ENCODE measurements at regions of chr10 and their contacts with region 1.

Region 1: DNA sequence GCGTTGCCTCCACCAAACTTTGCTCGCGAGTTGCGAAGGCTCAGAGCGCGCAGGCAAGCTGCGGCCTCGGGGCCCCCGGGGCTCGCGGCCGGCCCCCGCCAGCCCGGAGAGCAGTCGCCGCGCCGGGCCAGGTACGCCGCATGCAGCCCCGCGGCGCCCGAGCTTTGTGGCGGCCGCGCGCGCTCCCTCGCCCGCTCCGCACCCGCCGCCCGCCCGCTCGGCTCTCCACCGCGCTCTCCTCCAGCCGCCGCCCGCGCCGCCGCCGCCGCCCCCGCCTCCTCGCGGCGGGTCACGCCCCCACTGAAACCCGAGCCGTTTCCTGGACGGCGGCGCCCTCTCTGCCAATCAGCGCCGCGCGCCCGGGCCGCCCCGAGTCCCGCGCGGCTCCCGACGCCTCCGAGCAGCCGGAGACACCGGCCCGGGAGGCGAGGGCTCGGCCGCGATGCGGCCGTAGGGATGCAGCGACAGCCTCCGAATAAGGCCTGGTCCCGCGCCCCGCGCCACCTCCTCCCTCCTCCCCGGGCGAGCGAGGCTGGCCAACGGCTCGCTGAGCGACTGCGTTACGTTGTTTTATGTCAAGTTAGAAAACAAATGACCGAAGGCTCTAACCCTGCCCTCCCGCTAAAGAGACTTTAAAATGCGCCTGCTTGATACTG is at the start of gene FGFR2:
- DNase-seq: peak; percentile 85
- H3K4me3 ChIP-seq: peak within 1 kb of the TSS; percentile 79 to 93 (median 83)
- H3K27ac ChIP-seq: peak within 1 kb of the TSS; percentile 87
- H3K4me1 ChIP-seq: peaks cover 22% of the 10 kb centered on the region
- H3K27me3 ChIP-seq: no peaks in the 10 kb centered on the region
- CTCF ChIP-seq: no peak
- total RNA-seq, gene FGFR2: 22.0 to 86.9 TPM

Region 2: DNA sequence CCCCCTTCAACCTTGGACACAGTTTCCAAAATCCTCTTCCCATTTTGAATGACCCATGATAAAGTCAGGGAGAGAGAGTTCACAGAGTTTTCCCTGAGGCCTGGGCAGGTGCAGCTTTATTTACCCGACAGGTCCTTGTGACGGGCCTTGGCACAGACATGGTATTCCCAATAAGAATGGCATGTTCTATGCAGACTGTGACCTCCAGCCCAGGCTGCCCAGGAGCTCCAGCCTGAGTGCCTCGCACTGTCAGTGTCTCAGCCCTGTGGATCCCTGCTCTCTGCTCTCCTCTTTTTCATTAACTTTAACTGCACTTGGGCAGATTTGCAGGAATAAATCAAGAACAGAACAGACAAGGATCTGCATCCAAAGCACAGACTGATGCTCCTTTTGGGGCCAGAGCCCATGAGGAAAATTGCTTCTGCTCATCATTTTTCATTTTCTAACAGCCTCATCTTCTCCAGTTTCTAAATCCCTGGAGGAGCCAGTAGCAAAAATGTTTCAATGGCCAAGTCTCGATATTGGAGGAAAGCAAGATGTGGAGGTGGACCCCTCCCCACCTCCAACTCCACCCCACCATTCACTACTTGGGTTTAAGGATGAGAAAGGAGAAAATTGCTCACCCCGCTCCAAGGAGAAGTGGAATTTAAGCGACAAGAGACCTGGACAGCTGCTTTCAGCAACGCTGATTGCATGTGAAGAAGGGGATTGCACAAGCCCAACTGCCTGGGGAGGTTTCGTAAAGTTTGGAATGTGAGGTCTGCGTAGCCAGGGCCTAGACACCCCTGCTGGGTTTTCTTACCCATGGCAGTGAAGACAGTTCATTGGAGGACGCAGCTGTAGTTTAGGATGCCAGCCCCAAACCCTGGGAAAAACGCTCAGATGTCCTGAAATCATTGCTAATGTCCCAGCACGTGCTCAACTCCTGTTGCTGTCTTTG is 521.3 kb before region 1 on chr10:
- CTCF ChIA-PET with region 1: no interaction called
- dilution Hi-C with region 1: no loop called
- in situ Hi-C with region 1: loop called in 1 of 2 experiments (anchors 25 kb)
- intact Hi-C with region 1: loop called (anchors 5 kb)
- DNase-seq: peak; percentile 78
- H3K4me3 ChIP-seq: no peak overlapping the region
- H3K27ac ChIP-seq: peak overlapping the region; percentile 95
- H3K4me1 ChIP-seq: peaks cover 38% of the 10 kb centered on the region
- H3K27me3 ChIP-seq: no peaks in the 10 kb centered on the region
- CTCF ChIP-seq: peak in 1 of 2 donors; percentile 3

Region 3: GRCh38 chr10:121157998-121158397 is 440.3 kb before region 1 on chr10:
- CTCF ChIA-PET with region 1: no interaction called
- dilution Hi-C with region 1: no loop called
- in situ Hi-C with region 1: no loop called
- intact Hi-C with region 1: loop called (anchors 5 kb)
- DNase-seq: peak; percentile 54
- H3K4me3 ChIP-seq: no peak overlapping the region
- H3K27ac ChIP-seq: peak overlapping the region; percentile 100
- H3K4me1 ChIP-seq: peaks cover 49% of the 10 kb centered on the region
- H3K27me3 ChIP-seq: no peaks in the 10 kb centered on the region
- CTCF ChIP-seq: no peak

Region 4: GRCh38 chr10:121418126-121418777 is 180.1 kb before region 1 on chr10:
- CTCF ChIA-PET with region 1: interaction called, 3 read pairs
- dilution Hi-C with region 1: no loop called
- in situ Hi-C with region 1: no loop called
- intact Hi-C with region 1: loop called (anchors 5 kb)
- DNase-seq: peak; percentile 80
- H3K4me3 ChIP-seq: no peak overlapping the region
- H3K27ac ChIP-seq: no peak overlapping the region
- H3K4me1 ChIP-seq: peaks cover 15% of the 10 kb centered on the region
- H3K27me3 ChIP-seq: no peaks in the 10 kb centered on the region
- CTCF ChIP-seq: peak in 1 of 2 donors; percentile 12

Region 5: DNA sequence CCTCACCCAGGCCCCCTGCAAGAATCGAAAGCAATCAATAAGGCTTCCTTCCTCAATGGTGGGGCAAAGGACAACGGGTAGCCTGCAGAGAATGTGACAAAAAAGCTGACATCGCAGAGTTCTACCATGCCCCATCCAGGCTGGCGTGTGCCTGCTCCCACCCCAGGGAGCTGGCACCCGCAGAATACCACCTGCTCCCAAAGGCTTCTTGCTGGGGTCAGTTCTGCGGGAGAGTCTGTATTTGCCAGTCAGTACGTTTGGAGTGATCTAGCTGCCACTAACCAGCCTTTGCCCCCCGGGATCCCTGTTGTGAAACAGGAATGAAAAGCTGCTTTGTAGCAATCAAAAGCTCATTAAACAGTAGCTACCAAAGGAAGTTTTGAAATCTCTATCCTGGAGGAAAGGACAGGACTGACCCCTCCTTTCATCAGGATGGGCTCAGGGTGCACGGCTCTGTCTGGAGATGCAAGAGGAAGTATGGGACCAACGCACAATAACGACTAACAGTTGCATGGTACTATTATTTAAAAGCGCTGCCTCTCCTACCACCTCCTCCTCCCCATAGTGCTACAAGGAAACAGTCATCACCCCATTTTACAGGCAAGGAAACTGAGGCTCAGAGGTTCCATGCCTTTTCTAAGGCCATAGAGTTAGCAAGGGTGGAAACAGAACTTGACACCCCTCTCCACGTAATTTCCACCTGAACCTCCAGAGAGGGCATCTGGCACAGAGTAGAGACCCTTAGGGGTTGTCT is 67.1 kb before region 1 on chr10:
- CTCF ChIA-PET with region 1: no interaction called
- dilution Hi-C with region 1: no loop called
- in situ Hi-C with region 1: no loop called
- intact Hi-C with region 1: loop called (anchors 5 kb)
- DNase-seq: no peak
- H3K4me3 ChIP-seq: no peak overlapping the region
- H3K27ac ChIP-seq: no peak overlapping the region
- H3K4me1 ChIP-seq: peaks cover 14% of the 10 kb centered on the region
- H3K27me3 ChIP-seq: no peaks in the 10 kb centered on the region
- CTCF ChIP-seq: no peak

Region 6: DNA sequence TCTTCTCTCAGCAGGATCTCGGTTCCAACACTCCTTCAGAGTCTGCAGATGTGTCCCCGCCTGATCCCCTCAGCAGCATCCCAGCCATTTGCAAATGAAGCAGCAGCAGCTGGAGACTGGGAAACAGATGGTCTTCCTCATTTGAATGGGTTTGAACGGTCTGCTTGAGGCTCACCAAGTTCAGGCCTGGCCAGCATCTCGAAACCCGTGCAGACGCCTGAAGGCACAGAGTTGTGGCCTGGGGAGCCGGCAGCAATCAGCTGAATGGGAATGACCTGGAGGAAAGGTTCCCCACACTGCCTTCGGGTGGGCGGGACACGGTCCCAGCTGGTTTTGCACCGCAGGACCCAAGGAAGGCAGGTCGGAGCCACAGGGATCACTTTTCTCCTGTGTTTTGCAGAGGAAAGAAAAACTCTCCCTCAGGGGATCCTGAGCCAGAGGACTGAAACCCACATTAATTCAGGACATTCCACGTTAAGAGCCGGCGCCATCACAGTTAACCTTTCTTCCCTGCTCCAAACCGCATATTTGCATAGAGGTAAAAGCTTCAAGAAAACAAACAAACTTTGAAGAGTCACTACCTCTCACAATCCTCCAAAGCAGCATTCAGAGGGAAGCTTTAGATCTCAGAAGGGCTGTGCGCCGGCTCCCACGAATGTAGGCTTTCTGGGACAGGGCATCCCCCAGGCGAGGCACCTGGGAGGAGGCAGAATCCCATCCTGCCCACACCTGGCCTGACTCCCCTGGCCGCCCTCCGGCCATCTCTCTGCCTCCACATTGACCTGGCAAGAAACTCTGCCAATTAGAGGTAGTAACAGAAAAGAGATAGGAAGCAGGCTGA is 17.8 kb before region 1 on chr10:
- CTCF ChIA-PET with region 1: no interaction called
- dilution Hi-C with region 1: no loop called
- in situ Hi-C with region 1: no loop called
- intact Hi-C with region 1: loop called (anchors 1 kb)
- DNase-seq: peak; percentile 29
- H3K4me3 ChIP-seq: no peak overlapping the region
- H3K27ac ChIP-seq: peak overlapping the region; percentile 40
- H3K4me1 ChIP-seq: peaks cover 48% of the 10 kb centered on the region
- H3K27me3 ChIP-seq: no peaks in the 10 kb centered on the region
- CTCF ChIP-seq: no peak

Region 7: GRCh38 chr10:121886997-121887622 is 288.8 kb after region 1 on chr10:
- CTCF ChIA-PET with region 1: no interaction called
- dilution Hi-C with region 1: no loop called
- in situ Hi-C with region 1: loop called in 1 of 2 experiments (anchors 25 kb)
- intact Hi-C with region 1: loop called (anchors 5 kb)
- DNase-seq: peak; percentile 51
- H3K4me3 ChIP-seq: no peak overlapping the region
- H3K27ac ChIP-seq: no peak overlapping the region
- H3K4me1 ChIP-seq: no peaks in the 10 kb centered on the region
- H3K27me3 ChIP-seq: no peaks in the 10 kb centered on the region
- CTCF ChIP-seq: peak; percentile 96 to 98

Measured in mammary epithelial cell (primary cell).